ENCODE measurements at regions of chr19 and their contacts with region 1.

Region 1: DNA sequence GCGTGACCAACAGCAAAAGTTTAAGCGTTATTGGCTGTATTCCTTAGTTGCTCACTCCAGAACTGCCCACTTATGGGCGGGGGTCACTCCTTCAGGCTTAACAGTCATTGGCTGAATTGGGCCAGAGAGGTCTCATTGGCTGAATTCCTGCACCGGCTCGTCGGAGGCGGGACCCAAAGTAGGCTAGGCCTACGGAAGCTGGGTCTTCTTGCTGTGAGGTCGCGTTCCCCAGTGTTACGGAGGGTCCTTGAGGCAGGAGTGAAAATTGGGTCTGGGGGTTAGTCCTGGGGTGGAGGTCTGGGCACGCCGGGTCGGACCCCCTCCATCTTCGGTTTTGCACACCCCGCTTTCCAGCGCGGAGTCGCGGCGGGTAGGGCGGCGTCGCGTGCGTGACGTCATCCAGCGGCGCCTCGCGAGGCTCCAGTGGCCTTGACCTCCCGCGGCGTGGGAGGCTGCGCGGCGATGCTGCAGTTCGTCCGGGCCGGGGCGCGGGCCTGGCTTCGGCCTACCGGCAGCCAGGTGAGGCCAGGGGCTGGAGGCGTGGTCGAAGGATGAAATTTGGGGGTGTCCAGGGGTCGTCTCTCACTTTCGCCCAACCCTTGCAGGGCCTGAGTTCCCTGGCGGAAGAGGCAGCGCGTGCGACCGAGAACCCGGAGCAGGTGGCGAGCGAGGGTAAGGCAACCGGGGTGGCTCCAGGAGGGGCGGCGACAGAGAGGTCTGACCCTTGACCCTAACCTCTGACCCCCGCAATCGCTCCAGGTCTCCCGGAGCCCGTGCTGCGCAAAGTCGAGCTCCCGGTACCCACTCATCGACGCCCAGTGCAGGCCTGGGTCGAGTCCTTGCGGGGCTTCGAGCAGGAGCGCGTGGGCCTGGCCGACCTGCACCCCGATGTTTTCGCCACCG is at the start of gene MRPL4:
- DNase-seq: peak; percentile 91 to 98
- ATAC-seq: peak; percentile 94 to 97 (median 96)
- H3K4me3 ChIP-seq: peak within 1 kb of the TSS; percentile 47 to 99 (median 82)
- H3K27ac ChIP-seq: peak within 1 kb of the TSS; percentile 44 to 95 (median 88)
- H3K4me1 ChIP-seq: peaks cover 0 to 32% (median 14%) of the 10 kb centered on the region in 9 donors
- H3K27me3 ChIP-seq: no peaks in the 10 kb centered on the region
- CTCF ChIP-seq: no peak
- total RNA-seq, gene MRPL4: 53.2 to 94.3 (median 69.0) TPM

Region 2: GRCh38 chr19:9891609-9892373 is 360.3 kb before region 1 on chr19:
- intact Hi-C with region 1: no loop called
- DNase-seq: no peak
- ATAC-seq: no peak
- H3K4me3 ChIP-seq: no peak overlapping the region
- H3K27ac ChIP-seq: no peak overlapping the region
- H3K4me1 ChIP-seq: no peaks in the 10 kb centered on the region
- H3K27me3 ChIP-seq: peaks cover 0 to 15% (median 0%) of the 10 kb centered on the region in 7 donors
- CTCF ChIP-seq: no peak

Region 3: GRCh38 chr19:10106100-10106936 is 145.7 kb before region 1 on chr19 and contains the start of gene PPAN:
- intact Hi-C with region 1: loop called in 2 of 10 experiments (anchors 5 kb)
- DNase-seq: peak; percentile 97 to 99
- ATAC-seq: peak; percentile 96 to 99 (median 98)
- H3K4me3 ChIP-seq: peak within 1 kb of the TSS; percentile 54 to 87 (median 79)
- H3K27ac ChIP-seq: peak within 1 kb of the TSS in 9 of 10 donors; percentile 69 to 88 (median 85)
- H3K4me1 ChIP-seq: peaks cover 5 to 52% (median 15%) of the 10 kb centered on the region in 9 donors
- H3K27me3 ChIP-seq: no peaks in the 10 kb centered on the region
- CTCF ChIP-seq: peak in 2 of 9 donors; percentile 5 to 18
- total RNA-seq, gene PPAN: 17.6 to 43.3 (median 20.7) TPM

Region 4: DNA sequence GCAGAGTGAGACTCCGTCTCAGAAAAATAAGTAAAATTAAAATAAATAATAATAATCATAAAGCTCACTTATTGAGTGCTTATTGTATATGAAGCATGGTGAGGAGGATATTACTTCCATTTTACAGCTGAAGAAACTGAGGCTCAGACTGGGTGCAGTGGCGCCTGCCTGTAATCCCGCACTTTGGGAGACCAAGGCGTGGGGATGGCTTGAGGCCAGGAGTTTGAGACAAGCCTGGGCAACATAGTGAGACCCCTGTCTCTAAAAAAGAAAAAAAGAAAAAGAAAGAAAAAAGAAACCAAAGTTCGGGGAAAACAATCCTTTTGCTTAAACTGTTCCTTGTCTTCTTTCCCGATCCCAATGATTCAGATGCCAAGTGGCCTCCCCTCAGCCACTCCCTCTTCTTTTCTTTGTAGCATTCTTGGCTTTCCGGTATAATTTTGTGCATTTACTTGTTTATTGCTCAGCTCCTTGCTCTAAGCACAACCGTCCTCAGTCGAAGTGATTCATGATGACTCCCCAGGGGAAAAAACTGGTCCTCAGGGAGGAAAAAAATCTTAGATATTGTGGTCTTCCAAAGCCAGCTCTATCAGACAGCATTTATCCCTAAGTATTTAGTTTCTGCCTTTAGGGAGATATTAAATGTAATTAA is 131.4 kb before region 1 on chr19:
- intact Hi-C with region 1: loop called in 1 of 10 experiments (anchors 2 kb)
- DNase-seq: no peak
- ATAC-seq: peak in 1 of 8 donors; percentile 30
- H3K4me3 ChIP-seq: peak overlapping the region in 3 of 10 donors; percentile 83 to 94 (median 93)
- H3K27ac ChIP-seq: peak overlapping the region in 2 of 10 donors; percentile 15 to 48
- H3K4me1 ChIP-seq: peaks cover 8 to 29% (median 16%) of the 10 kb centered on the region in 9 donors
- H3K27me3 ChIP-seq: no peaks in the 10 kb centered on the region
- CTCF ChIP-seq: no peak

Region 5: GRCh38 chr19:10230861-10231611 is 21.0 kb before region 1 on chr19 and contains the start of gene S1PR2:
- intact Hi-C with region 1: loop called in 3 of 10 experiments (anchors 1 to 2 kb)
- DNase-seq: peak; percentile 86 to 87
- ATAC-seq: peak; percentile 59 to 84 (median 72)
- H3K4me3 ChIP-seq: peak within 1 kb of the TSS; percentile 70 to 99 (median 94)
- H3K27ac ChIP-seq: peak within 1 kb of the TSS; percentile 81 to 99 (median 94)
- H3K4me1 ChIP-seq: peaks cover 8 to 65% (median 54%) of the 10 kb centered on the region in 9 donors
- H3K27me3 ChIP-seq: peaks cover 0 to 7% (median 0%) of the 10 kb centered on the region in 7 donors
- CTCF ChIP-seq: peak in 1 of 9 donors; percentile 18
- total RNA-seq, gene S1PR2: 1.8 to 12.2 (median 3.3) TPM